ENCODE measurements at regions of chr17 and their contacts with region 1.

Region 1: DNA sequence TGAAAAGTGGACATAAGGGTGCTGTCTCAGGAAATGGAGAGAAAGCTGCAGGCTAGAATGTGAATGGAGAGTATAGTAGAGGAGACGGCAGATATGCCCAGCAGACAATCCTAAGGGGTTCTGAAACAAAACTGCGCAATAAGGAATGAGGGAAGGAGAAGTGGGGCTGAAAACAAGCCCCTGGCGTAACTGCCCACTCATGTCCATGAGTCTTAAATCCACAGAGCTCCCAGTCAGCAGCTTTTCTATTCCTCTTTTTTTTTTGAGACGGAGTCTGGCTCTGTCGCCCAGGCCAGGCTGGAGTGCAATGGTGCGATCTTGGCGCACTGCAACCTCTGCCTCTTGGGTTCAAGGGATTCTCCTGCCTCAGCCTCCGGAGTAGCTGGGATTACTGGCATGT is 5.9 kb downstream of the STRADA start:
- DNase-seq: no peak
- ATAC-seq: no peak
- H3K4me3 ChIP-seq: no peak overlapping the region
- H3K27ac ChIP-seq: no peak overlapping the region
- H3K4me1 ChIP-seq: peaks cover 6 to 10% of the 10 kb centered on the region in 2 donors
- H3K27me3 ChIP-seq: no peaks in the 10 kb centered on the region
- CTCF ChIP-seq: no peak
- POLR2A ChIP-seq: no peak

Region 2: GRCh38 chr17:63785556-63785955 is 49.9 kb after region 1 on chr17:
- in situ Hi-C with region 1: loop called in 1 of 4 experiments (anchors 5 kb)
- intact Hi-C with region 1: no loop called
- DNase-seq: no peak
- ATAC-seq: peak; percentile 88 to 92
- H3K4me3 ChIP-seq: no peak overlapping the region
- H3K27ac ChIP-seq: peak overlapping the region; percentile 57 to 71 (median 63)
- H3K4me1 ChIP-seq: peaks cover 21% of the 10 kb centered on the region in 2 donors
- H3K27me3 ChIP-seq: no peaks in the 10 kb centered on the region
- CTCF ChIP-seq: no peak
- POLR2A ChIP-seq: no peak

Measured in gastrocnemius medialis (tissue), 4 donors.